ENCODE measurements at regions of chr10 and their contacts with region 1.

Region 1: GRCh38 chr10:72215652-72216549 is at the starts of genes ANAPC16 and ASCC1:
- DNase-seq: peak; percentile 75 to 94 (median 88)
- H3K4me3 ChIP-seq: peak within 1 kb of the TSS; percentile 61 to 97 (median 82)
- H3K27ac ChIP-seq: peak within 1 kb of the TSS; percentile 95 to 100 (median 100)
- H3K27me3 ChIP-seq: no peaks in the 10 kb centered on the region
- CTCF ChIP-seq: peak in 22 of 56 donors; percentile 10 to 52 (median 26)
- total RNA-seq, gene ANAPC16: 27.8 to 74.8 (median 40.9) TPM
- total RNA-seq, gene ASCC1: 22.8 to 68.2 (median 40.7) TPM

Region 2: DNA sequence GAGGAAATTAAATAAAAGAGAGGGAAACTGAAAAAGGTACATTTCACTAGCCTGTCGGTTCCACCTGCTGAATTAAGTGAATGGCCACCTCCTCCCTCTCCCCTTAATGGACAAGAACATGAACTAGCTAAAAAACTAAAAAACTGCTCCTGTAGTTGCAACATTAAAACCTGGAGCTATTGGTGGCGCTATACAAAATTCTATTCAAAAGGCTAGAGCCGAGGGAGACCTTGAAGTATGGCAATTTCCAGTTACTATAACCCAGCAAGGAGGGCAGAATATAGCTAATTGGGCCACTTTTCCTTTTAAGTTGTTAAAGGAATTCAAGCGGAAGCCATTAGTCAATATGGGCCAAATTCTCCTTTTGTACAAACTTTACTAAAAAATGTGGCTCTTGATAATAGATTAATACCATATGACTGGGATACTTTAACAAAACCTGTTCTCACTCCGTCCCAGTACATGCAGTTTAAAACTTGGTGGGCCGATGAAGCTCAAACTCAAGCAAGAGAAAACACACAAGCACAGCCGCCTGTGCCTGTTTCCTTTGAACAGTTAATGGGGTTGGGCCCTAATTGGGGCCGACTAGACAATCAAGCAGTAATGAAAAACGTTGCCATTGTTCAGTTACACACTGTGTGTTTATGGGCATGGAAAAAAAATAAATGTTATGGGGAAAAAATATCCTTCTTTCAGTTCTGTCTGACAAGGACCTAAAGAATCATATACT is 258.2 kb before region 1 on chr10:
- intact Hi-C with region 1: loop called (anchors 10 kb)
- DNase-seq: no peak
- H3K4me3 ChIP-seq: no peak overlapping the region
- H3K27ac ChIP-seq: peak overlapping the region in 55 of 59 donors; percentile 1 to 86 (median 64)
- H3K27me3 ChIP-seq: no peaks in the 10 kb centered on the region
- CTCF ChIP-seq: peak in 6 of 56 donors; percentile 6 to 22 (median 12)

Region 3: GRCh38 chr10:72133517-72133916 is 82.4 kb before region 1 on chr10:
- intact Hi-C with region 1: loop called in 1 of 2 experiments (anchors 10 kb)
- DNase-seq: no peak
- H3K4me3 ChIP-seq: no peak overlapping the region
- H3K27ac ChIP-seq: peak overlapping the region in 35 of 59 donors; percentile 2 to 79 (median 48)
- H3K27me3 ChIP-seq: no peaks in the 10 kb centered on the region
- CTCF ChIP-seq: no peak

Measured in dorsolateral prefrontal cortex (tissue), 120 donors.